A549 (cell line): ENCODE measurements at regions of chr3 and their contacts with region 1.

Region 1: GRCh38 chr3:191313296-191313695 is 15.9 kb upstream of the CCDC50 start:
- DNase-seq: no peak
- ATAC-seq: no peak
- H3K4me3 ChIP-seq: no peak overlapping the region
- H3K27ac ChIP-seq: no peak overlapping the region
- H3K4me1 ChIP-seq: no peaks in the 10 kb centered on the region
- CTCF ChIP-seq: no peak
- EP300 ChIP-seq: no peak
- POLR2A ChIP-seq: no peak
- RAD21 ChIP-seq: no peak

Region 2: GRCh38 chr3:191141728-191142127 is 171.6 kb before region 1 on chr3:
- CTCF ChIA-PET with region 1: no interaction called
- POLR2A ChIA-PET with region 1: interaction called, 12 read pairs
- DNase-seq: peak; percentile 1 to 34
- ATAC-seq: peak in 1 of 2 experiments; percentile 46; a peak in 2 of 6 replicates
- H3K4me3 ChIP-seq: no peak overlapping the region
- H3K27ac ChIP-seq: no peak overlapping the region
- H3K4me1 ChIP-seq: 0 out of 3 replicates have a peak, but pooled peaks cover 3% of the 10 kb centered on the region
- CTCF ChIP-seq: no peak
- EP300 ChIP-seq: no peak
- POLR2A ChIP-seq: no peak
- RAD21 ChIP-seq: no peak